ENCODE measurements at regions of chr17 and their contacts with region 1.

Region 1: DNA sequence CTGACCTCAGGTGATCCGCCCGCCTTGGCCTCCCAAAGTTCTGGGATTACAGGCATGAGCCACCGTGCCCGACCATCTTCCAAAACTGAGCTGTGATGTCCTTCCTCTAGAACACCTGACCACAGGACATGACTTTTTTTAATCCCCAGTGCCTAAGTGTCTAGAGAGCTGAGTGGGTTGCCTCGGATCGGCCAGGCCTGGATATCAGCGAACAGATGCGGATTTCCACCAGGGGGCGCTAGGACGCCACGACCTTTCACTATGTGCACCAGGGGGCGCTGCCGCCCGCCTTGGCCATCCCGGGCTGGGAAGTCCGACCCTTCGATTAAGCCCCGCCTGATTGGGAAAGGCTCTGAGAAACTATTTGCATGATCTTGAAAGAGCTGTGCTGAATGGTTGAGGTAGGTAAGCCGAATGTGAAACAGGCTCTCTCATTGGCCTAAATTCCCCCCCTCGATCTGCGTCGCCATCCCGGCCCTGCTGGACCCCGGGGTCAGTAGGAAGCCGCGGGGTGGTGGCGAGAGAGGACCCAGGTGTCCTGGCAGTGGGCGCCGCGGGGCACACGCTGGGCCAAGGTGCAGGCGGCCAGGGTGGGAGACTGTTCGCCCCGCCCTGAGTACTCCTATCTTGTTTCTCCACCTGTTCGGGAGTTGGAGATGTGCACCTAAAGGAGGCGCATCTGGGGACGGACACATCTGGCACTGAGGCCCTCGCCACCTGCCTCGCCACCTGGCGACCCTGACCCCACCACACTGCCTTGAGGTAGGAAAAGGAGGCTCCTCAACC is at the start of gene ACBD4:
- DNase-seq: peak; percentile 94 to 99 (median 98)
- ATAC-seq: peak; percentile 88
- H3K4me3 ChIP-seq: peak within 1 kb of the TSS; percentile 87
- H3K4me3 Mint-ChIP-seq: peak within 1 kb of the TSS; percentile 94
- H3K27ac ChIP-seq: peak within 1 kb of the TSS; percentile 43 to 58
- H3K27ac Mint-ChIP-seq: peak within 1 kb of the TSS; percentile 85
- H3K4me1 ChIP-seq: peaks cover 37% of the 10 kb centered on the region
- H3K4me1 Mint-ChIP-seq: peaks cover 26% of the 10 kb centered on the region
- H3K27me3 ChIP-seq: no peaks in the 10 kb centered on the region
- H3K27me3 Mint-ChIP-seq: no peaks in the 10 kb centered on the region
- CTCF ChIP-seq: peak; percentile 100
- total RNA-seq, gene ACBD4: 24.8 to 26.3 TPM

Region 2: DNA sequence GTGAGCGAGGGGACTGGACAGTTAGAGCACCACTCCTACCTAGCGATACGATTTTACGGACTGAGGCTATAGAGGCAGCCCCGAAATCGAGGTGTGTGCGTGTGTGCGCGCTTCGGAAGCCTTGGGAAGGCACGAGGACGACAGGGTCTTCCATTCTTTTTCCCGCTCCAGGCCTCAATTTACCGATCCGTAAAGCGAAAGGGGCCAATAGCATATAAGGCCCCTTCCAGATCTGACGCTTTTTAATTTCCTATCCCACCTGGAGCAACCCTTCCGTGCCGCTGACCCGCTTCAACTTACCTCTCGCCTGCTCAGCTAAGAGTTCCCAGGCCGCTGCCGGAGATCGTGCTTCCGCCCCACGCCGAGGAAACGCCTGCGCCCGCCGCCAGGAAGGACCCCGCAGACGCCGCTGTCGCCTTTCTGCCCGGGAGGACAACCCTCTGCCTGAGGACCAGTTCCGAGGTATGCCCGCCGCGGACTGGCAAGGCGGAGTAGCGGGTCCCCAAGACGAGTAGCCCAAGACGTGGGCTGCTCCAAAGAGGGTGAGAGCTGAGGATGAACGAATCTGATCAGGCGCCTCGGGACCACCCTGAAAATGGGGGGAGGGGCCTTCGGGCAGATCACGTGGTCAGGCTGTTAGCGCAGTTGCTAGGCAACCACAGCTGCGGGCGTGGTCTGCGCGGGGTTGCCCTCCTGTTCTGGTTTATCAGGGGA is 236.2 kb before region 1 on chr17 and contains the start of gene EFTUD2:
- CTCF ChIA-PET with region 1: no interaction called
- POLR2A ChIA-PET with region 1: no interaction called
- intact Hi-C with region 1: loop called in 1 of 2 experiments (anchors 5 kb)
- DNase-seq: peak; percentile 87 to 96 (median 91)
- ATAC-seq: peak; percentile 95
- H3K4me3 ChIP-seq: peak within 1 kb of the TSS; percentile 82
- H3K4me3 Mint-ChIP-seq: peak within 1 kb of the TSS; percentile 95
- H3K27ac ChIP-seq: peak within 1 kb of the TSS; percentile 98 to 99
- H3K27ac Mint-ChIP-seq: peak within 1 kb of the TSS; percentile 99
- H3K4me1 ChIP-seq: peaks cover 29% of the 10 kb centered on the region
- H3K4me1 Mint-ChIP-seq: peaks cover 37% of the 10 kb centered on the region
- H3K27me3 ChIP-seq: no peaks in the 10 kb centered on the region
- H3K27me3 Mint-ChIP-seq: peaks cover 10% of the 10 kb centered on the region
- CTCF ChIP-seq: no peak
- total RNA-seq, gene EFTUD2: 105 to 112 TPM

Region 3: GRCh38 chr17:45155029-45155428 is 19.6 kb after region 1 on chr17:
- CTCF ChIA-PET with region 1: interaction called, 168 read pairs
- POLR2A ChIA-PET with region 1: interaction called, 192 read pairs
- intact Hi-C with region 1: loop called in 1 of 2 experiments (anchors 1 kb)
- DNase-seq: peak in 2 of 14 experiments; percentile 30 to 47
- ATAC-seq: no peak
- H3K4me3 ChIP-seq: no peak overlapping the region
- H3K4me3 Mint-ChIP-seq: no peak overlapping the region
- H3K27ac ChIP-seq: no peak overlapping the region
- H3K27ac Mint-ChIP-seq: no peak overlapping the region
- H3K4me1 ChIP-seq: peaks cover 40% of the 10 kb centered on the region
- H3K4me1 Mint-ChIP-seq: peaks cover 48% of the 10 kb centered on the region
- H3K27me3 ChIP-seq: no peaks in the 10 kb centered on the region
- H3K27me3 Mint-ChIP-seq: no peaks in the 10 kb centered on the region
- CTCF ChIP-seq: no peak

Region 4: DNA sequence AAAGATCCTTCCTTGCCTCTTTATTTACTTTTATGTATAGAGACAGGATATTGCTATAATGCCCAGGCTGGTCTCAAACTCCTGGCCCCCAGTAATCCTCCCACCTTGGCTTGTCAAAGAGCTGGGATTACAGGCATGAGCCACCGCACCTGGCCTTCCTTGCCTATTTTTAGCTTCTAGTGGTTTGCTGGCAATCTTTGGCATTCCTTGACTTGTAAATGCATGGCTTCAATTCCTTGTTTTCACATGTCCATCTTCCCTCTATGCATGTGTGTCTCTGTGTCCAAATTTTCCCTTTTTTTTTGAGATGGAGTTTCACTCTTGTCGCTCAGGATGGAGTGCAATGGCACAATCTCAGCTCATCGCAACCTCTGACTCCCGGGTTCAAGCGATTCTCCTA is 48.8 kb after region 1 on chr17:
- CTCF ChIA-PET with region 1: interaction called, 11 read pairs
- POLR2A ChIA-PET with region 1: no interaction called
- intact Hi-C with region 1: no loop called
- DNase-seq: no peak
- ATAC-seq: no peak
- H3K4me3 ChIP-seq: no peak overlapping the region
- H3K4me3 Mint-ChIP-seq: no peak overlapping the region
- H3K27ac ChIP-seq: no peak overlapping the region
- H3K27ac Mint-ChIP-seq: no peak overlapping the region
- H3K4me1 ChIP-seq: no peaks in the 10 kb centered on the region
- H3K4me1 Mint-ChIP-seq: no peaks in the 10 kb centered on the region
- H3K27me3 ChIP-seq: no peaks in the 10 kb centered on the region
- H3K27me3 Mint-ChIP-seq: no peaks in the 10 kb centered on the region
- CTCF ChIP-seq: no peak

Region 5: DNA sequence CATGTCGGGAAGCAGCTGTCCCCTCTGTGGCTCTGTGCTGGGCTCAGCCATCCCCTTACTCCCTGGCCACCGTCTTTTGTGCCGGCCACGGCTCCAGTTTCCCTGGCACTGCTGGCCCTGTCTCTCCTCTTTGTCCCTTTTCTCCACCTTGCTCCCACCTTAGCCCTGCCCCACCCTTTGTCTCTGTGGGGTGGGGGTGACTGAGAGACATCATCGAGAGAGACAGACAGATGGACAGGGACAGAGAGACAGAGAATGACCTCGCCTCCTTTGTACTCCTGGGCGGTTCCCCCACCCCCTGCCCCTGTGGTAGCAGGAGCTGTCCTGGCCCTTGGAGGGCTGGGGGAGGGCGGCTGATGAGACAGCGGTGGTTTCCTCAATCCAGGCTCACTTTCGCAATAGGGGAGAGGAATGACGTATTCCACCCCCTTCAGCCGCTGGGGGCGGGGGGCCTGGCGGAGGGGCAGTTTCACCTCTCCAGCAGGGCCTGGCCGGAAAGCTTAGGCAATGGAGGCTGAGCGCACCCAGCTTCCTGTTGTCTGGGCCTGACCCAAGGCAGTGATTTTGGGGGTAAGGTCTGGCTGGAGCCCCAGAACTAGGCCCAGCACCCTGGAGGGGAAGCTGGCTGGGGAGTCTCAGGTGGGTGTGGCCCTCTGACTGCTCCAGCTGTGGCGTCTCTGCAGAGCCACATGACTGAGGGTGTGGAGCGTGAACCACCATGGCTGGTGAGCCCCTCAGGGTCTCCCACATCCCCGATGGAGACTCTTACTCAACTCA is 93.6 kb after region 1 on chr17:
- CTCF ChIA-PET with region 1: interaction called, 16 read pairs
- POLR2A ChIA-PET with region 1: interaction called, 9 read pairs
- intact Hi-C with region 1: no loop called
- DNase-seq: peak; percentile 56 to 93 (median 79)
- ATAC-seq: peak; percentile 57
- H3K4me3 ChIP-seq: peak overlapping the region; percentile 99
- H3K4me3 Mint-ChIP-seq: peak overlapping the region; percentile 87
- H3K27ac ChIP-seq: peak overlapping the region; percentile 98 to 99
- H3K27ac Mint-ChIP-seq: peak overlapping the region; percentile 100
- H3K4me1 ChIP-seq: peaks cover 98% of the 10 kb centered on the region
- H3K4me1 Mint-ChIP-seq: peaks cover 79% of the 10 kb centered on the region
- H3K27me3 ChIP-seq: no peaks in the 10 kb centered on the region
- H3K27me3 Mint-ChIP-seq: no peaks in the 10 kb centered on the region
- CTCF ChIP-seq: no peak

Region 6: GRCh38 chr17:45385331-45385997 is 250.1 kb after region 1 on chr17:
- CTCF ChIA-PET with region 1: interaction called, 4 read pairs
- POLR2A ChIA-PET with region 1: no interaction called
- intact Hi-C with region 1: loop called in 1 of 2 experiments (anchors 1 kb)
- DNase-seq: peak; percentile 77 to 97 (median 88)
- ATAC-seq: peak; percentile 97
- H3K4me3 ChIP-seq: no peak overlapping the region
- H3K4me3 Mint-ChIP-seq: no peak overlapping the region
- H3K27ac ChIP-seq: no peak overlapping the region
- H3K27ac Mint-ChIP-seq: no peak overlapping the region
- H3K4me1 ChIP-seq: peaks cover 10% of the 10 kb centered on the region
- H3K4me1 Mint-ChIP-seq: peaks cover 4% of the 10 kb centered on the region
- H3K27me3 ChIP-seq: no peaks in the 10 kb centered on the region
- H3K27me3 Mint-ChIP-seq: peaks cover 12% of the 10 kb centered on the region
- CTCF ChIP-seq: peak; percentile 95

Measured in CD4-positive, alpha-beta T cell (primary cell).